ENCODE measurements at regions of chr16 and their contacts with region 1.

Region 1: DNA sequence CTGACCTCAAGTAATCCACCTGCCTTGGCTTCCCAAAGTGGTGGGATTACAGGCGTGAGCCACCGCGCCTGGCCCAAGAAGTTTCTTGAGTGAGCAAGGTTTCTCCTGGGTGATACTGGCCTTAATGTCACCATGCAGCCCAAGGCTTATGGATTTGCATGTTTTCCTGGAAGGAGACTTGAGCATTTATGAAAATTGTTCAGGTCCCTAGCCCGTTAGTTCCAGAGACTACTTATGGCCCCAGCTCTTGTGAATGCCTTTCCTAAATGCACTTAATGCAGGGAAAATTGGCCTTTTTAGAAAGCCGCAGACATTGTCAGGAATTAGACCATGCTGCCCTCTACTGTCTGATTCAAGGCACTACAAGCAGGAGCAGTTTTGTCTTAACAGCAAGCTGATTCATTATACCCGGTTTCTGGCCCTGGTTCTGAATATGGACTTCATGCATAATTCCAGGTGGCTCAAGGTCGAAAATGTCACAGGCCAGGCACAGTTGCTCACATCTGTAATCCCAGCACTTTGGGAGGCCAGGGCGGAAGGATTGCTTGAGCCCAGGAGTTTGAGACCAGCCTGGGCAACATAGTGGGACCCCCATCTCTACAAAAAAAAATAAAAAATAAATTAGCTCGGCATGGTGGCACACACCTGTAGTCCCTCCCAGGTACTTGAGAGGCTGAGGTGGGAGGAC is 91.3 kb downstream of the SNX29 start:
- DNase-seq: peak; percentile 54 to 89 (median 71)
- H3K4me3 ChIP-seq: no peak overlapping the region
- H3K27ac ChIP-seq: no peak overlapping the region
- H3K4me1 ChIP-seq: no peaks in the 10 kb centered on the region
- H3K27me3 ChIP-seq: no peaks in the 10 kb centered on the region
- CTCF ChIP-seq: peak; percentile 92 to 97 (median 94)
- POLR2A ChIP-seq: no peak

Region 2: GRCh38 chr16:11407047-11407982 is 660.5 kb before region 1 on chr16:
- intact Hi-C with region 1: loop called in 1 of 2 experiments (anchors 10 kb)
- DNase-seq: peak; percentile 55 to 90 (median 72)
- H3K4me3 ChIP-seq: no peak overlapping the region
- H3K27ac ChIP-seq: no peak overlapping the region
- H3K4me1 ChIP-seq: peaks cover 0 to 5% of the 10 kb centered on the region in 2 donors
- H3K27me3 ChIP-seq: no peaks in the 10 kb centered on the region
- CTCF ChIP-seq: peak; percentile 66 to 86 (median 80)
- POLR2A ChIP-seq: no peak

Region 3: DNA sequence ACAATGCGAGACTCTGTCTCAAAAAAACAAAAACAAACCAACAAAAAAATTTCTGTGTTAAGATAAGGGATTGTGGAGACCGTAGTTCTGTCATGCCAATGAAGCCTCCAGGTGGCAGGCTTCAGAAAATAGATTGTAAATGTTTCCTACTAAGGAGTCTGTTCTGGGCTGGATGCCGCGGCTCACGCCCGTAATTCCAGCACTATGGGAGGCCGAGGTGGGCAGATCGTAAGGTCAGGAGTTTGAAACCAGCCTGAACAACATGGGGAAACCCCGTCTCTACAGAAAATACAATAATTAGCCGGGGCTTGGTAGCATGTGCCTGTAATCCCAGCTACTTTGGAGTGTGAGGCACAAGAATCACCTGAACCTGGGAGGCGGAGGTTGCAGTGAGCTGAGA is 95.7 kb before region 1 on chr16:
- intact Hi-C with region 1: loop called (anchors 5 to 10 kb)
- DNase-seq: peak in 4 of 7 donors; percentile 33 to 65 (median 52)
- H3K4me3 ChIP-seq: no peak overlapping the region
- H3K27ac ChIP-seq: no peak overlapping the region
- H3K4me1 ChIP-seq: peaks cover 7 to 10% of the 10 kb centered on the region in 2 donors
- H3K27me3 ChIP-seq: no peaks in the 10 kb centered on the region
- CTCF ChIP-seq: peak in 3 of 6 experiments; percentile 37 to 50 (median 43)
- POLR2A ChIP-seq: no peak

Region 4: DNA sequence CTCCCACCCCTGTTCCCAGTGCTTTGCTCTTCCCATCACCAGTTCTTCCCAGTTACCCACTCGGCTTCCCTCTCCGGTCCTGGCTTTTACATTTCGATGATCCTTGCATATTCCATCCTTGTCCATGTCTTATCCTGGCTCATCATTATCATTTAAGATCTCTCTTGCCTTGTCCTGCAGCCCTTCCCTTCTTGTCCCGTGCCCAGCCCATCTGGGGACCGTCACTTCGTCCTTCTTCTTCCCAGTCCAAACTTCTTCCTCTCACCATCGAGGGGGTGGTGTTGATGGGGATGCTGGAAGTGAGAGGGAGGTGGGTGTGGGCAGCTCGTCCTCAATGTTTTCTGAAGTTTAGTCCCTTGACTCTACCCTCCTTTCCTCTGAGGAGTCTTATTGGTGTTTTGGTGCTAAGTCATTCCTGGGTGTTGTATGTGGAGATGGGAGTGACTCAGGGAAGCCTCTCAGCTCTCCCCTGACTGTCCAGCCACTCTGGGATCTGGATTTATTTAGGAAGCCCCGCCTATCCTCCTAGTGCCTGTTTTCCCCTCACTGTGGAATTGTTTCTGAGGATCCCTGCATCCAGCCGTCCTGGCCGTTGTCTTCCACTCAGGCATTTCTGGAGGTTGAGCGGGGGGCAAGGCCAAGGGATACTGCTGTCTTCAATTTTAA is 90.3 kb before region 1 on chr16:
- intact Hi-C with region 1: loop called (anchors 5 to 10 kb)
- DNase-seq: peak in 5 of 7 donors; percentile 22 to 46 (median 33)
- H3K4me3 ChIP-seq: peak overlapping the region in 3 of 4 donors; percentile 49 to 100 (median 86)
- H3K27ac ChIP-seq: peak overlapping the region in 3 of 5 donors; percentile 13 to 72 (median 67)
- H3K4me1 ChIP-seq: peaks cover 7 to 21% of the 10 kb centered on the region in 2 donors
- H3K27me3 ChIP-seq: no peaks in the 10 kb centered on the region
- CTCF ChIP-seq: no peak
- POLR2A ChIP-seq: peak in 1 of 2 donors; percentile 16

Measured in adrenal gland (tissue), 19 donors.